ENCODE measurements at regions of chr17 and their contacts with region 1.

Region 1: DNA sequence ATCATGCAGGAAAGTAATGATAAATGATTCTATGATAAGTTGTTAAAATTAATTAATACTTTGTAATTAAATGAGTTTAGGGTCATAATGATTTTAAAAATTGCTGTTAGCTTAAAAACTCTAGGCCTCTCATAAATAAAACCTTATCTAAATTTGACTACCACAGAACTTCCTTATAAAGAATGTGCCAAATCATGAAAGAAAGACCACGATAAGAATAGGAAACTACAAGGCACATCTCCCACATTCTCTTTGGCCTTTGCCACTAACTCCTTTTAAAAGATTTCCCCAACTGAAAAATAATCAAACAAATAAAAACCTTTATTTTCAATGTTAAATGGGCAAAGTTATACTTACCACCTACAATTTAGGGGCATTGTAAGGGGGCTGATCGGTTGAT is 164.6 kb upstream of the C17orf78 start:
- DNase-seq: no peak
- ATAC-seq: no peak
- H3K4me3 ChIP-seq: no peak overlapping the region
- H3K27ac ChIP-seq: no peak overlapping the region
- H3K4me1 ChIP-seq: no peaks in the 10 kb centered on the region
- H3K27me3 ChIP-seq: no peaks in the 10 kb centered on the region
- CTCF ChIP-seq: no peak
- EP300 ChIP-seq: no peak
- POLR2A ChIP-seq: no peak
- RAD21 ChIP-seq: no peak

Region 2: DNA sequence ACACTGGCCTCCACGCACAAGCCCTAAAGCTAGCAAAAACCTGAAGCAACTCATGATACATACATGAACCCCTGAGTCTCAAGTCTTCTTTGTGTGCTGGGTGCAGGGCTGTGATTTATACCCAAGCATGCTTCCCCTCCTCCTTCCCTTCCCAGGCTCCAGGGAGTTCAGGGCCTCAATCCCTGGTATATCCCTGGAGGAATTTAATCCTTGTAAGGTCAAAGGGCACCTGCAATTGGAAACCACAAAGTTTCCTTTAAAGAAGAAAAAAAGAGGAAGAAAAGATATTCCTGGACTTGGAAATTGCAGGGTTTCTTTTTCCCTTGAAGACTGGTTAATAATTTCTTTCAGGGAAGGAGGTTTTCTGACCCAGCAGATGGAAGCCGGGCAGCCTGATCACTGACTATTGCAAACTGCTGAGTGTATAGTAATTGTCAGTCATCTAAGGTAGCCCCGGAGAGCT is 80.1 kb before region 1 on chr17:
- CTCF ChIA-PET with region 1: no interaction called
- POLR2A ChIA-PET with region 1: no interaction called
- RAD21 ChIA-PET with region 1: no interaction called
- SMC1A ChIA-PET with region 1: no interaction called
- in situ Hi-C with region 1: no loop called
- intact Hi-C with region 1: no loop called
- DNase-seq: no peak
- ATAC-seq: no peak
- H3K4me3 ChIP-seq: no peak overlapping the region
- H3K27ac ChIP-seq: no peak overlapping the region
- H3K4me1 ChIP-seq: no peaks in the 10 kb centered on the region
- H3K27me3 ChIP-seq: no peaks in the 10 kb centered on the region
- CTCF ChIP-seq: no peak
- EP300 ChIP-seq: no peak
- POLR2A ChIP-seq: no peak
- RAD21 ChIP-seq: no peak

Region 3: DNA sequence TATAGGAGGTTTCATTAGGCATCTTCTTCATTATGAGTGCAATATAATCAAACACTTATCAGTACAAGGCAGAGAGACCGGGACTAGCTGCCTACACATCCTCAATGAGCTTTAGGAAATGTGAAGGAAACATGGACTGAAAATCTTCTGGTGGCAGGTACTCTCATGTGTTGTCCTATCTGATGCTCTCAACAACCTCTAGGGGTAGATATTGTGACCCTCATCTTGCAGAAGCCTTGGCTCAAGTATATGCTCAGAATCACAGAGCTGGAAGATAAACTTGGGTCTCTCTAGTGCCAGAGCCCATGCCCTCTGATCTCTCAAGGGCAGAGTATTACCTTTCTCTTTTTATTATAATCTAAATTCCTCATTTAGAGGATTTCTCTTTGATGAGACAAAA is 16.9 kb before region 1 on chr17:
- CTCF ChIA-PET with region 1: interaction called, 11 read pairs
- POLR2A ChIA-PET with region 1: no interaction called
- RAD21 ChIA-PET with region 1: interaction called, 5 read pairs
- SMC1A ChIA-PET with region 1: interaction called, 4 read pairs
- in situ Hi-C with region 1: no loop called
- intact Hi-C with region 1: no loop called
- DNase-seq: no peak
- ATAC-seq: no peak
- H3K4me3 ChIP-seq: no peak overlapping the region
- H3K27ac ChIP-seq: no peak overlapping the region
- H3K4me1 ChIP-seq: no peaks in the 10 kb centered on the region
- H3K27me3 ChIP-seq: no peaks in the 10 kb centered on the region
- CTCF ChIP-seq: no peak
- EP300 ChIP-seq: no peak
- POLR2A ChIP-seq: no peak
- RAD21 ChIP-seq: no peak

Region 4: GRCh38 chr17:37239690-37240334 is 28.7 kb after region 1 on chr17:
- CTCF ChIA-PET with region 1: interaction called, 16 read pairs
- POLR2A ChIA-PET with region 1: no interaction called
- RAD21 ChIA-PET with region 1: no interaction called
- SMC1A ChIA-PET with region 1: interaction called, 7 read pairs
- in situ Hi-C with region 1: no loop called
- intact Hi-C with region 1: no loop called
- DNase-seq: no peak
- ATAC-seq: no peak
- H3K4me3 ChIP-seq: no peak overlapping the region
- H3K27ac ChIP-seq: no peak overlapping the region
- H3K4me1 ChIP-seq: no peaks in the 10 kb centered on the region
- H3K27me3 ChIP-seq: no peaks in the 10 kb centered on the region
- CTCF ChIP-seq: peak; percentile 43 to 67 (median 60); a peak in 5 of 6 replicates
- EP300 ChIP-seq: no peak
- POLR2A ChIP-seq: no peak
- RAD21 ChIP-seq: peak; percentile 53

Region 5: DNA sequence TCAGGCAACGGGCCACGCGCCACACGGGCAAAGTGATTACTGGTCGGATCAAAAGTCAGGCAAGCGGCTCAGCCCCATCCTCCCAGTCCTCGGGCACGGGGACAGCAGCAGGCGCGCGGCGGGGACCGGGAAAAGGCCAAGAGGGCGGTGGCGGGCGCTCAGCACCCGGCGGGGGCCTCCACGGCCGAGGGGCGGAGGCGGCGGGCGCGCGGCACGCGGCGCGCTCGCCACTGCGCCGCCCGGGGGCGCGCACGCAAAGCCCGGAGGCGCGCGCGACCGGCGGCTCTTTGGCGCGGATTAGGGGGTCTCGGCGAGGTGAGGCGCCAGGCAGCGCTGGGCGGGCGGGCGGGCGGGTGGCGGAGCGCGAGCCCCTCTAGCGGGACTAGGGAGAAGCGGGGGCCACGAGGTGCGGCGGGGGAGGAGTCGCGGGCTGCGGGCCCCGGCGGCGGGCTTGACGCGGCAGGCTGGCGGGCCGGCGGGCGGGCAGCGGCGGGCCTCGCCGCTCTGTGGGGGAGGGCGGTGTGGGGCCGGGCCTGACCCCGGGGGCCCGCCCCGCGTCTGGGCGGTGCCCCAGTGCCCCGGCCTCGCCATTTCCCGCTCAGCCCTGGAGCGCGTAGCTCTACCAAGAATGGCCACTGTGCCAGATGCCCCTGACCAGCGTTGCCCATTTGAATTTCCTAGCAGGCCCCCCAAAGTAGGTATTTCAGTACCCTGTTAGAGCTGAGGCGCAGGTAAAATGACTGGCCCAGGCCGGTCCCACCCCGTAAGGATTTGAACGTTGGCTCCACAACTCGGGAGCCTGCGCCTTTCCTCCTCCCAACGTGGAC is 195.7 kb after region 1 on chr17 and contains the starts of genes ACACA and TADA2A:
- CTCF ChIA-PET with region 1: no interaction called
- POLR2A ChIA-PET with region 1: no interaction called
- RAD21 ChIA-PET with region 1: no interaction called
- SMC1A ChIA-PET with region 1: no interaction called
- in situ Hi-C with region 1: no loop called
- intact Hi-C with region 1: no loop called
- DNase-seq: no peak
- ATAC-seq: peak; percentile 95
- H3K4me3 ChIP-seq: peak within 1 kb of the TSS; percentile 96
- H3K27ac ChIP-seq: peak within 1 kb of the TSS; percentile 95
- H3K4me1 ChIP-seq: peaks cover 21% of the 10 kb centered on the region
- H3K27me3 ChIP-seq: no peaks in the 10 kb centered on the region
- CTCF ChIP-seq: no peak
- EP300 ChIP-seq: no peak
- POLR2A ChIP-seq: peak; percentile 84
- RAD21 ChIP-seq: no peak
- polyA plus RNA-seq, gene ACACA: 12.9 to 14.7 TPM
- polyA plus RNA-seq, gene TADA2A: 39.9 to 43.8 TPM